GM10248 (cell line): ENCODE measurements at regions of chr18 and their contacts with region 1.

Region 1: GRCh38 chr18:26438980-26439379 is 109.4 kb downstream of the KCTD1 start:
- DNase-seq: peak; percentile 61
- CTCF ChIP-seq: no peak

Region 2: DNA sequence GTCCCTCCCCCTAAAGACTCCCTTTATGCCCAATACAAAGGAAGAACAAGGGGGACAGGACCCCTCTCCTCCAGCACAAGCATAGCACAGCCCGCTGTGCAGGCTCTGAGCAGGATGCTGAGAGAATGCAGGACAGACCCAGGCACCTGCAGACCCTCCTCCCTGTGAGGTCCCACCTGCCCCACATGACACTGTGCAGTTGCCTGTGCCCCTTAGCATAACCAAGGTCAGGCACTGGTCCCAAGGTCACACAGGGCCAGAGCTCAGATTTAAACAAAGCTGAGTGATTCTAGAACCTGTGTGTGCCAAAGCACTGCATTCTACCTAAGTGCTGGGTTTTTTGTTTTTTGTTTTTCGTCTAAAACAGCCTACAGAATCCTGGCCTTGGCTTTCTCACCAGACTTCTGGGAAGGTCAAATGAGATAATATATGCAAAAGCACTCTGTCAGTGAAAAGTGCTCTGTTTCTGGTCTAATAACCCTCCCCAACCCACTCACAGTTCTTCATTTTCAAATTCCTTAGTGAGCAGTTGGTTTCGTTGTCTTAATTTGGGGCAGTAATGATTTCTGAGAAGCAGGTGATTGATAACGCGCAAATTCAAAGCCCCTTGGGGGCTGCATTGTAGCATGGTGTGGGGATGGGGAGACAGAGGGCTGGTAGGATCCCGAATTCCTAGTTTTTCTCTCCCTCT is 16.4 kb before region 1 on chr18:
- CTCF ChIA-PET with region 1: interaction called, 11 read pairs
- POLR2A ChIA-PET with region 1: no interaction called
- DNase-seq: peak; percentile 60
- CTCF ChIP-seq: no peak

Region 3: DNA sequence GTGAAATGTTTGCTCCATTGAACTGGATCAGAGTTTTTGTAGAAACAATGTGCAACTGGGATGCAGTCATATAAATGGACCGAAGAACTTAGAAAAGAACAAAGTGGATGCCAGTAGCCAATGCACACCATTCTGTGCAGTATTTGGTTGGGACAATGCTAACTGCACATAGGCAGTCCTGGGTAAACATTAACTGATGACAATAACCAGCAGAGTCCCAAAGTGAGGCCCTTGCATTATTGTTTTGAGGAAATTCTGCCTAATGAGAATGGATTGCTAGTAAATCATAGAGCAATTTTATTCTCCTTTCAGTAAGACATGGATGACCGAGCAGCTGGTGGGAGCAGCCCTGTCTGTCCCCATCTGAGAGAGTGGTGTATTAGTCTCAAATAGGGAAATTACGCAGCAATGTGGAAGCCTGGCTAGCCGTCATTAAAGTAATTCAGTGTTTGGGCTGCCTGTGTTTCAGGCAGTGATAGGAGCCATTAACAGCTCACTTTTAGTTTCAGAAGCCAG is 14.5 kb after region 1 on chr18:
- CTCF ChIA-PET with region 1: interaction called, 32 read pairs
- POLR2A ChIA-PET with region 1: no interaction called
- DNase-seq: no peak
- CTCF ChIP-seq: no peak